ENCODE measurements at regions of chr15 and their contacts with region 1.

Region 1: DNA sequence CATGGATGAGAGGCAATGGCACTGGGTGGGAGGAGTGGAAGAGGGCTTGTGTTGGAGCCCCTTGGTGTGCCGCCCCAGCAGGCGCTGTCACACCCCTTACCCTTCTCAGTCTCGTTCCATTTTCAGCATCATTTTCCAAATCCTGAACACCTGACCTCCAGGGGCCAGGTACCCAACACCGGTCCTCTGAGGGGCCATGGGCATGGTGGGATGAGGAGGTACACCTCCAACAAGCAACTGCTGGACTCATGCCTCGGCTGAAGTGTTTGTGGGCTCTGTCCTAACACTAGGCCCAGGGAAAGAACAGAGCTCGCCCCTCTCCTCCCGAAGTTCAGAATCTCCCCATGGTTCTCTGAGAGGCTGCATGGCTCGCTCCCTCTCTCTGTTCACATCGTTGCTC is 19.8 kb downstream of the SNAPC5 start:
- DNase-seq: no peak
- ATAC-seq: no peak

Region 2: GRCh38 chr15:66459818-66460615 is 17.7 kb before region 1 on chr15:
- intact Hi-C with region 1: loop called (anchors 1 kb)
- DNase-seq: no peak
- ATAC-seq: no peak